ENCODE measurements at regions of chr1 and their contacts with region 1.

Region 1: DNA sequence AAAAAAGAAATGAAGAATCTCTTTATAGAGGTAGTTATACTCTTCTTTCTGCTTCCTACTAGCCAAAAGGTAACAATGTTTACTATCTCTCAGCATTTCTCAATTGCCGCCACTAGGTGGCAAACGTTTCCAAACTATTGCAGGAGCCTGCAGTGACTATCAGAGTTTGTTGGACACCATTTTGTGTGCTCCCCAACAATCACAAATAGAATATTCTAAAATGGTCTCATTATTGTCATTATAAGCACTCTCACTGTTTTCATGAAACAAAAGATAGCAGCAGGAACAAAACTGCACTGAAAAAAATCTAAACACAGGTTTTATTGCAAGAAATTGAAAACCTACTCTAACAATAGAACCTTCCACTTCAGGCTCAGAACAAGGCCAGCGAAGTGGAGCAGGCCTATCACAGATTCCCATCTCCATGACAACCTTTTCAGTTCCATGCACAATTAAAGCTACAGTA is 83.9 kb upstream of the PLPPR4 start:
- DNase-seq: peak; percentile 13 to 71 (median 53)
- ATAC-seq: peak; percentile 61
- H3K4me3 ChIP-seq: no peak overlapping the region
- H3K4me3 Mint-ChIP-seq: no peak overlapping the region
- H3K27ac ChIP-seq: no peak overlapping the region
- H3K27ac Mint-ChIP-seq: no peak overlapping the region
- H3K4me1 ChIP-seq: no peaks in the 10 kb centered on the region
- H3K4me1 Mint-ChIP-seq: no peaks in the 10 kb centered on the region
- H3K27me3 ChIP-seq: no peaks in the 10 kb centered on the region
- H3K27me3 Mint-ChIP-seq: peaks cover 4% of the 10 kb centered on the region
- CTCF ChIP-seq: peak; percentile 97

Region 2: GRCh38 chr1:99476058-99476457 is 295.7 kb after region 1 on chr1:
- CTCF ChIA-PET with region 1: interaction called, 3 read pairs
- POLR2A ChIA-PET with region 1: no interaction called
- intact Hi-C with region 1: loop called in 1 of 2 experiments (anchors 5 kb)
- DNase-seq: no peak
- ATAC-seq: no peak
- H3K4me3 ChIP-seq: no peak overlapping the region
- H3K4me3 Mint-ChIP-seq: no peak overlapping the region
- H3K27ac ChIP-seq: no peak overlapping the region
- H3K27ac Mint-ChIP-seq: no peak overlapping the region
- H3K4me1 ChIP-seq: no peaks in the 10 kb centered on the region
- H3K4me1 Mint-ChIP-seq: no peaks in the 10 kb centered on the region
- H3K27me3 ChIP-seq: no peaks in the 10 kb centered on the region
- H3K27me3 Mint-ChIP-seq: peaks cover 10% of the 10 kb centered on the region
- CTCF ChIP-seq: no peak

Measured in CD8-positive, alpha-beta T cell (primary cell).